ENCODE measurements at regions of chr19 and their contacts with region 1.

Region 1: DNA sequence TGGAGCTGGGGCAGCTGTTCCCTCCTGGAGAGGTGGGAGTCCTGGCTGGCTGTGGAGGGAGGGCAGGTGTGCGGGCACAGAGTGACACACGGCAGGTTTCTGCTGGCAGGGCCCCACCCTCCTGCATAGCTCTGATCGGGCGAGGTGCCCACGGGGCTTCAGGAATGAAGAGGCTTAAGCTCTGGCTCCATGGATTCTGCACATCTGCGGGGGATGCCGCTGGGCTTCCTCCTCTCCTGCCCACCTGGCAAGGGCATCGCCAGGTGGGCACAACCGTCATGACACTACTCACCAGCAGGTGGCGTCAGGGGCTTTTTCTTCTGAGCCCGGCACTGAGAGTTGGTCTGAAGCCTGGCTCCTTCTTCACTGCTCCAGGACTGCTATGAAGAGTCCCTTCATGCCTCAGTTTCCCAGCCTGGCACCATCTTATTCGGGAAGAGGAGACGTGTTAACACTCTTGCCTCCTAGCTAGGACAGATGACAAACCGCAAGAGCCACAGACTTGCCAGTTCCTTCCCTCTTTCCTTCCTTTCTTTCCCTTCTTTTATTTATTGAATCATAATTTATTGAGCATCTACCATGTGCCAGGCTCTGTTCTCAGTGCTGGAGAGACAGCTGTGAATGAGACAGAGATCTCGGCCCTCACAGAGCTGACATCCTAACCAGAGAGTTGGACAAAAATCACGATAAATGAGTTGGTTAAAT is 15.2 kb upstream of the PAK4 start:
- DNase-seq: peak; percentile 72 to 95
- ATAC-seq: peak; percentile 47 to 73; a peak in 5 of 6 replicates
- H3K4me3 ChIP-seq: no peak overlapping the region
- H3K27ac ChIP-seq: peak overlapping the region; percentile 89 to 90
- H3K4me1 ChIP-seq: peaks cover 40% of the 10 kb centered on the region
- CTCF ChIP-seq: peak; percentile 99
- EP300 ChIP-seq: no peak
- POLR2A ChIP-seq: no peak
- RAD21 ChIP-seq: peak; percentile 91

Region 2: DNA sequence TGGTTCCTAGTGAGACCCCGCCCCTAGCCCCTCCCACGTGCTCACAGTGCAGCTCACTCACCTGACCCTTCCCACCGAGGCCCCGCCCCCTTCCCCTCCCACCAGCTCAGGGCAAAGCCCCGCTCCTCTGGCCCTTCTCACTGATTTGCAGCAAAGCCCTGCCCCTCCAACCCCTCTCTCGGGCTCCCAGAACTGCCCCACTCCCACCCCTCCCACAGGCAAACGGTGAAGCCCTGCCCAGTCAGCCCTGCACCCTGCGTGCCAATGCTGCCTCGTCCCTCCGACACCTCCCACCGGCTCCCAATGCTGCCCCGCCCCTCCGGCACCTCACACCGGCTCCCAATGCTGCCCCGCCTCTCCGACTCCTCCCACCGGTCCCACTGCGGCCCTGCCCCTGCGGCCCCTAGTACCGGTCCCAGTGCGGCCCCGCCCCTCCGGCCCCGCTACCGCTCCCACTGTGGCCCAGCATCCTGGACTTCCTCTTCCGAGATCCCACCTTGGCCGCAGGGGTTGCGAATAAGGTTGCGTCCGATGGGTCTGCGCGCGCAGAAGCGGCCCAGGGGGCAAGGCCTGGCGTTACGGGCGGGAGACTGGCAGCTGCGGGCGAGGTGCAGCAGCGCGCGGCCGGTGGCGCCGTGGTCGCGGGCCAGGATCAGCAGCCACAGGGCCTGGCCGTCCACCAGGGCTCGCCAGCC is 78.9 kb before region 1 on chr19:
- CTCF ChIA-PET with region 1: interaction called, 33 read pairs
- POLR2A ChIA-PET with region 1: no interaction called
- DNase-seq: peak; percentile 99
- ATAC-seq: peak; percentile 92 to 96
- H3K4me3 ChIP-seq: peak overlapping the region; percentile 53
- H3K27ac ChIP-seq: peak overlapping the region; percentile 83 to 92
- H3K4me1 ChIP-seq: peaks cover 25% of the 10 kb centered on the region
- CTCF ChIP-seq: no peak
- EP300 ChIP-seq: no peak
- POLR2A ChIP-seq: peak; percentile 83
- RAD21 ChIP-seq: no peak; a peak in 1 of 5 replicates

Region 3: GRCh38 chr19:39070888-39071287 is 39.5 kb before region 1 on chr19:
- CTCF ChIA-PET with region 1: interaction called, 119 read pairs
- POLR2A ChIA-PET with region 1: interaction called, 16 read pairs
- DNase-seq: peak in 1 of 2 experiments; percentile 64
- ATAC-seq: peak; percentile 26 to 45; a peak in 4 of 6 replicates
- H3K4me3 ChIP-seq: no peak overlapping the region
- H3K27ac ChIP-seq: peak overlapping the region; percentile 60 to 72; a peak in 5 of 6 replicates
- H3K4me1 ChIP-seq: peaks cover 40% of the 10 kb centered on the region
- CTCF ChIP-seq: no peak
- EP300 ChIP-seq: peak in 1 of 2 experiments; percentile 48; a peak in 2 of 5 replicates
- POLR2A ChIP-seq: no peak
- RAD21 ChIP-seq: no peak

Region 4: GRCh38 chr19:39138221-39139211 is 28.1 kb after region 1 on chr19:
- CTCF ChIA-PET with region 1: interaction called, 22 read pairs
- POLR2A ChIA-PET with region 1: no interaction called
- DNase-seq: no peak
- ATAC-seq: no peak
- H3K4me3 ChIP-seq: no peak overlapping the region
- H3K27ac ChIP-seq: peak overlapping the region in 1 of 2 experiments; percentile 64; a peak in 3 of 6 replicates
- H3K4me1 ChIP-seq: peaks cover 52% of the 10 kb centered on the region
- CTCF ChIP-seq: no peak
- EP300 ChIP-seq: no peak
- POLR2A ChIP-seq: no peak
- RAD21 ChIP-seq: no peak

Region 5: DNA sequence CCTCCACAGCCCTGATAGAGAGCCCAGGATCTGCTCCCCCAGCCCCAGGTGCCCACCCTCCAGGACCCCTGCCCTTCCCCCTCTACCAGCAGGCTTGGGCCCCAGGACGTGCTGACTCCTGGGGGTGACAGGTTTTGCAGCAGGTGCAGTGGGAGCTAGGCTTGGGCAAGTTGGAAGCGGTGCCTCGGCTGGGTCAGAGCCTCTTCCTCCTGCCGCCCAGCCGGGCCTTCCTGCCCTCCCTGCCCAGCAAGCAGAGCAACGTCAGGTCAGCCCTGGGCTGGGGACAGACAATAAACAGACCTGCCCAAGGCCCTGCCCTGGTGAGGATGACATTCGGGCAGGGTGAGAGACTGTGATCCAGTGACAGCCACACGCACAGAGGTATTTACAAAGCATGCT is 77.1 kb after region 1 on chr19:
- CTCF ChIA-PET with region 1: interaction called, 36 read pairs
- POLR2A ChIA-PET with region 1: no interaction called
- DNase-seq: no peak
- ATAC-seq: peak; percentile 35 to 45
- H3K4me3 ChIP-seq: no peak overlapping the region
- H3K27ac ChIP-seq: peak overlapping the region in 1 of 2 experiments; percentile 31; a peak in 3 of 6 replicates
- H3K4me1 ChIP-seq: peaks cover 11% of the 10 kb centered on the region; the same call in 2 of the 3 replicates
- CTCF ChIP-seq: peak; percentile 21; the same call in 2 of the 3 replicates
- EP300 ChIP-seq: no peak
- POLR2A ChIP-seq: peak; percentile 9; the same call in 1 of the 2 replicates
- RAD21 ChIP-seq: no peak; a peak in 1 of 5 replicates

Region 6: GRCh38 chr19:39308531-39309304 is 198.3 kb after region 1 on chr19:
- CTCF ChIA-PET with region 1: interaction called, 11 read pairs
- POLR2A ChIA-PET with region 1: no interaction called
- DNase-seq: peak in 1 of 2 experiments; percentile 71
- ATAC-seq: peak in 1 of 2 experiments; percentile 42; a peak in 3 of 6 replicates
- H3K4me3 ChIP-seq: no peak overlapping the region
- H3K27ac ChIP-seq: no peak overlapping the region
- H3K4me1 ChIP-seq: peaks cover 4% of the 10 kb centered on the region; the same call in 2 of the 3 replicates
- CTCF ChIP-seq: no peak
- EP300 ChIP-seq: no peak
- POLR2A ChIP-seq: no peak
- RAD21 ChIP-seq: no peak

Measured in A549 (cell line).